Common myeloid progenitor, CD34-positive (primary cell): ENCODE measurements at regions of chr14 and their contacts with region 1.

Region 1: DNA sequence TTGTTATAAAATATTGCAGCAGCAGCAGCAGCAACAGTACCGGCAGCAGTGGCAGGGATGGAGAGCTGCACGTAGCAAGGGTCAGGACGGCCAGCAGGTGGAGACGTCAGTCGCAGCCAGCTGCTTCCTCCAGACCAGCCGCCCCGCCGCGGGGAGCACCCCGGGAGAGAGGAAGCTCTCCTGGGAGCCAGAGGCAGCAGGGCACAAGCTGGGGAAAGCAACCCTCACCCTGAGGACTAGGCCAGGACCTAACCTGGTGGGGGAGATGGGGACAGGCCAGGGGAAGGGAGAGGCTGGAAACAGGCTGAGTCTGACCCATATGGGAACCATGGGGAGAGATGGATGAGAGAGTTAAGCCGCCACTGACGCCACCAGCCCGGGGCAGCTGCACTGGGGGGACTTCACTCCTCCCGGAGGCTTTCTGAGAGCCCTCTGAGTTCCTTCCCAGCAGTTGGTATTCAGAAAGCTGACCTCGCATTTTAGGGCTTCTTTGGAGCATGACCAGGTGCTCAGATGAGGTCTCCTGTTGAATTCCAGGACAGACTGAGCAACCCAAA is 56.3 kb downstream of the SPTB start:
- DNase-seq: peak; percentile 58 to 76 (median 76)
- H3K4me3 ChIP-seq: peak overlapping the region in 2 of 7 experiments; percentile 27 to 63
- H3K27ac ChIP-seq: no peak overlapping the region
- H3K4me1 ChIP-seq: peaks cover 0 to 5% (median 2%) of the 10 kb centered on the region in 4 experiments
- H3K27me3 ChIP-seq: peaks cover 0 to 27% (median 6%) of the 10 kb centered on the region in 5 experiments

Region 2: GRCh38 chr14:64645220-64645892 is 178.0 kb before region 1 on chr14:
- CTCF ChIA-PET with region 1: no interaction called
- POLR2A ChIA-PET with region 1: no interaction called
- DNase-seq: no peak
- H3K4me3 ChIP-seq: no peak overlapping the region
- H3K27ac ChIP-seq: no peak overlapping the region
- H3K4me1 ChIP-seq: no peaks in the 10 kb centered on the region
- H3K27me3 ChIP-seq: peaks cover 0 to 2% (median 0%) of the 10 kb centered on the region in 5 experiments

Region 3: DNA sequence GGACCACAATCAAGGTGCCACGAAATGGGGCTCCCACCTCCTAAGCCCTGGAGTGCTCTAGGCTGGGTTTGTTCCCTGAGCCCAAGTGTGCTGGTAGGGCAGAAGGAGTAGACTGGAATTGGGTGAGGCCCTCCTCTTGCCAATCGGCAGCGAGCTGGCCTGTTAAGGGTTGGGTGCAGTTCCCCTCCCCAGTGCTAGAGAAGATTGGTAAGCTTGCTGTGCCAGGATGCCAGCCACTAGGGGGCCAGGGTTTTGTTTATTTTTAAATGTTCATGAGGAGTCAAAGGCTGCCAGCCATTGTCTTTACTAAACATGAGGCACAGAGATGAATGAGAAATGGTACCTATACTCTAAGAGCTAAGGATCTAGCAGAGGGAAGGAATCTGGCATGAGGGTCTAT is 23.4 kb before region 1 on chr14:
- CTCF ChIA-PET with region 1: interaction called, 16 read pairs
- POLR2A ChIA-PET with region 1: no interaction called
- DNase-seq: peak; percentile 43 to 58 (median 50)
- H3K4me3 ChIP-seq: no peak overlapping the region
- H3K27ac ChIP-seq: no peak overlapping the region
- H3K4me1 ChIP-seq: peaks cover 0 to 6% (median 1%) of the 10 kb centered on the region in 4 experiments
- H3K27me3 ChIP-seq: peaks cover 0 to 4% (median 0%) of the 10 kb centered on the region in 5 experiments

Region 4: GRCh38 chr14:64841121-64841651 is 17.8 kb after region 1 on chr14:
- CTCF ChIA-PET with region 1: interaction called, 16 read pairs
- POLR2A ChIA-PET with region 1: no interaction called
- DNase-seq: no peak
- H3K4me3 ChIP-seq: no peak overlapping the region
- H3K27ac ChIP-seq: peak overlapping the region in 1 of 2 experiments; percentile 15
- H3K4me1 ChIP-seq: no peaks in the 10 kb centered on the region
- H3K27me3 ChIP-seq: peaks cover 2 to 29% (median 6%) of the 10 kb centered on the region in 5 experiments

Region 5: DNA sequence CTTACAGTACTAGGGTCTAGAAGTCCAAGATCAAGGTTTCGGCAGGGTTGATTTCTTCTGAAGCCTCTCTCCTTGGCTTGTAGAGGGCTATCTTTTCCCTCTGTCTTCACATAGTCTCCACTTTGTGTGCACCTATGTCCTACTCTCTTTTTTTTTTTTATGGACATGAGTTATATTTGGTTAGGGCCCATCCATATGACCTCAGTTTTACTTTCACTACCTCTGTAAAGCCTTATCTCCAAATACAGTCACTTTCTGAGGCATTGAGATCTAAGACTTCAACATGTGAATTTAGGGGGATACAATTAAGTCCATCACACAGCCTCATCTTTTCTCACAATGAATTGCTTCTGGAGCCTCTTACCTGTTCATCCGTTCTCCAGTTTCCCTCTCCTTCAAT is 62.2 kb after region 1 on chr14:
- CTCF ChIA-PET with region 1: interaction called, 113 read pairs
- POLR2A ChIA-PET with region 1: no interaction called
- DNase-seq: no peak
- H3K4me3 ChIP-seq: no peak overlapping the region
- H3K27ac ChIP-seq: no peak overlapping the region
- H3K4me1 ChIP-seq: peaks cover 0 to 5% (median 3%) of the 10 kb centered on the region in 4 experiments
- H3K27me3 ChIP-seq: peaks cover 9 to 25% (median 22%) of the 10 kb centered on the region in 5 experiments

Region 6: DNA sequence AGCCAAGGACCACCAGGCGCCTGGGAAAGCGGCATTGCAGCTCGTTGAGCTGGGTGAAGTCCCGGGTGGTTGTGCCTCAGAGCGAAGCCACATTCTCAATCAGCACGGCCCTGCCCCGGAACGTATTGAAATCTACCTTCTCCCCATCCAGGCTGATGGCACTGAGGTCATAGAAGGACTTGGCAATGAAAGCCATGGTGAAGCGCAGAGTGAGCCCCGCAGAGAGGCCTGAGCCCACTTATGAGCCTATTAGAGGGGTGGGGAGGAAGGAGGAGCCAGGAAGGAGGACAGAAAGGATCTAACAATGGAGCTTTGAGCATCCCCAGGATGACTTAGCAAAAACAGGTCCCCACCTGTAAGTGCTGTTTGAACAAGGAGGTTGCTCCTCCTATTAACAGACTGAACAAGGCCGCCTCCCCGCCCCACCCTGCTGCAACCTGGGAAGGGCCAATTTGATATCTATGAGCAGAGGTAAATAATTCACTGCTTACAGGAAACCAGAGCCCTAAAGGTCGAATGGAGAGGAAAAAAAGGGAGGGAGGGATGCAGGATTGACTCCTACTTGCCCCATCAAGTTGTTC is 119.2 kb after region 1 on chr14 and contains the start of gene GPX2:
- CTCF ChIA-PET with region 1: interaction called, 14 read pairs
- POLR2A ChIA-PET with region 1: no interaction called
- DNase-seq: no peak
- H3K4me3 ChIP-seq: no peak within 1 kb of the TSS
- H3K27ac ChIP-seq: no peak within 1 kb of the TSS
- H3K4me1 ChIP-seq: peaks cover 4 to 21% (median 15%) of the 10 kb centered on the region in 4 experiments
- H3K27me3 ChIP-seq: no peaks in the 10 kb centered on the region